Gastrocnemius medialis (tissue), 4 donors: ENCODE measurements at regions of chr4 and their contacts with region 1.

Region 1: DNA sequence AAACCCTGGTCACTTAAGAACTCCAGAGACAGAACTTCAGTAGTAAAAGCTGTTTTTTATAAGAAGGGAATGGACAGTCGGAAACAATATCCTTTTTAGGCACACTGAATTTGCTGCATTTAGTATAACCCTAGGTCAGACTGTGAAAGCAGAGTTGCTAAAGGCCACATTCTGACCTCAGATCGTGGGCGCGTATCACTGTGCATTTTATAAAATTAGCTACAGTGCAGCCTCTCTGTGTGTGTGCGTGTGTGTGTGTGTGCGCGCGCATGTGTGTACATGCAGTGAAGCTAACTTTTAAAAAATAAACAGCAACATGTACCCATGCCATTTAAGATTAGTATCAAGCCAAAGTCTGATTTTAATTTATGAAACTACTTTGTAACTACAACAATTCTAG is 8.0 kb downstream of the ZNF827 start:
- DNase-seq: peak in 1 of 2 donors; percentile 27
- ATAC-seq: peak; percentile 46 to 56
- H3K4me3 ChIP-seq: peak overlapping the region in 1 of 4 donors; percentile 4
- H3K27ac ChIP-seq: peak overlapping the region; percentile 55 to 68 (median 62)
- H3K4me1 ChIP-seq: peaks cover 46 to 52% of the 10 kb centered on the region in 2 donors
- H3K27me3 ChIP-seq: no peaks in the 10 kb centered on the region
- CTCF ChIP-seq: no peak
- POLR2A ChIP-seq: no peak

Region 2: DNA sequence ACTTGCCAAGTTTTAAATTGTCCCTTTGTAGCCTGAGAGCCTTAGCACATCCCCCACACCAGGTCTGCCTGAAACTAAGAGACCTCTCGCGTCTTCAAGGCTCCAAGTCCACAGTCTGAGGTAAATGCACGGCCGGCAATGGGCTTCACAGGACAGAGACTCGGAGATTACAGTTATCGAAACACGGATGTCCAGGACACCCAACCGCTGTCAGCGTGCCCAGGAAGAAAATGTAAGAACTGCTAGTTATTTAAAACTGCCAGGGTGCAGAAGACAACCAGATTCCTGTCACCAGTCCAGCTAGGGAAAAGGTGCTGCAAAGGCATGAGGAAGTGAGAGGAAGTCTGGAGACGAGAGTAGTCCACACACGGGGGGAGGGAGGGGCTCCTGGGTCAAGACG is 20.8 kb before region 1 on chr4:
- in situ Hi-C with region 1: no loop called
- intact Hi-C with region 1: loop called (anchors 2 kb)
- DNase-seq: peak in 1 of 2 donors; percentile 22
- ATAC-seq: peak; percentile 64 to 70
- H3K4me3 ChIP-seq: peak overlapping the region; percentile 52 to 62 (median 55)
- H3K27ac ChIP-seq: peak overlapping the region; percentile 65 to 79 (median 74)
- H3K4me1 ChIP-seq: peaks cover 51 to 58% of the 10 kb centered on the region in 2 donors
- H3K27me3 ChIP-seq: no peaks in the 10 kb centered on the region
- CTCF ChIP-seq: no peak
- POLR2A ChIP-seq: no peak